Upper lobe of right lung (tissue), 1 donor: ENCODE measurements at regions of chr3 and their contacts with region 1.

Region 1: DNA sequence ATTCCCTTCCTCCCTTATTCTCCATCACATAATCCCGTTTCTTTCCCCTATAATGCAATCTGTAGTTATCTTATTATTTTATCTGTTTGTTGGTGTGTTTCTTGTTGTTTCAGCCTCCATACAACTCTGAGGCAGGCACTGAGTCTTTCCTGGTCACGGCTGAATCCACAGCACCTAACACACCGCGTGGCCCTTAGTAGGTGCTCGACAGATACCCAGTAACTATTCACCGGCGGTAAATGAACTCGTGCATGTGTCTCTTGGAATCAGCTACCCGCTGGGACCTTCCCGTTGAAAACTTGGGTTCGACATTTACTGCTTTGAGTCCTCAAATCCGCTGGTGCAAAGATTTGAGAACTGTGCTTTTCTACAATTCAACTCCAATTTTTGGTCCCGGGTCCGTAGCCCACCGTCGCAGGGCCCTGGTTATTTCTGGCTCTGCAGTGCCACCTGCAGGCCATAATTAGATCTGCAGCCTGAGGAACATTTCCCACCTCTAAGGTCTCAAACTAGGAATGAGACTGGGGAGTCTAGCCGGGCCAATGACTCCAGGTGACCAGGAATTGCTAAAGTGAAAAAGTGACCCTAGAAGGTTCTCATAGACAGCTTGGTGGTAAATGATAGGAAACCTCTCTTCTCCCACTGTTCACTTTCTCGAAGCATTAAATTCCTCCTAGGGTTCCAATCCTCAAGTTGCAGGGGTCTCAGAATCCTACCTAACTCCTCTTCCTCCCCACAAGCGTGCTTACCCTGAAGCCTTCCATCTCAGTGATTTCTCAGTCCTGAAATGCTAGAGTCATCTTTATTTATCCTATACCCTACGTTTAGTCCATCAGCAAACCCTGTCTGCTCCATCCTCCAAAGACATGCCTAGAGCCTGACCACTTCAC is 40.0 kb upstream of the TRH start:
- DNase-seq: no peak
- ATAC-seq: peak; percentile 76
- H3K4me3 ChIP-seq: no peak overlapping the region
- H3K27ac ChIP-seq: no peak overlapping the region
- H3K4me1 ChIP-seq: no peaks in the 10 kb centered on the region
- H3K27me3 ChIP-seq: no peaks in the 10 kb centered on the region
- CTCF ChIP-seq: peak; percentile 94

Region 2: DNA sequence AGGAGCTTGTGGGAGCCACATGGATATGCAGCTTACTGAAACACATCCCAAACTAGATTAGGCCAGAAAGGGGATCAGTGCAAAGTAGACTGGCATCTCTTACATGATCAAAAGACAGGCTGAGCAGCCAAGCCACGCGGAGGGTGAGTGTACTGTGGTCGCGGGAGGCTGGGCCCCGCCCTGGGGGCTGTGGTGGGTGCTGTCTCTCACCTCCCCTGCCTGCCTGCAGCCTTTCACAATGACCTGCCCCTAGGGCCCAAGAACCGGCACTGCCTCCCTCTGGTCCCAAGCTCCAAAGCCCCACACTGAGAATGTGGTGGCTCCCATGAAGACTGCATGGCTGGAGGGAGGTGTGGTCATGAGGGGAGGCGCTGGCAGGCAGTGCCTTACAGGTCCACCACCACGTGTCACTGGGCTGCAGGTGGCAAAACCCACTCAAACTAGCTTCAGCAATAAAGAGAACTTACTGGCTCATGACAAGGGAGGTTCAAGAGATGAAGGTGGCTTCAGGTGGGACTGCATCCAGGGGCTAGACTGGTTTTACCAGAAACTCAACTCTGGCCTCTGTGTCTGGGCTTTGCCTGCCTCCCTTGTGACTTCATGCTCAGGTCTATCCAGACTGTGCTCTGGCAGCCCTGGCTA is 300.6 kb before region 1 on chr3:
- intact Hi-C with region 1: loop called (anchors 10 kb)
- DNase-seq: no peak
- ATAC-seq: peak; percentile 54
- H3K4me3 ChIP-seq: no peak overlapping the region
- H3K27ac ChIP-seq: no peak overlapping the region
- H3K4me1 ChIP-seq: no peaks in the 10 kb centered on the region
- H3K27me3 ChIP-seq: no peaks in the 10 kb centered on the region
- CTCF ChIP-seq: no peak